ENCODE measurements at regions of chr15 and their contacts with region 1.

Region 1: GRCh38 chr15:40684381-40684780 is 10.6 kb upstream of the RAD51 start:
- H3K4me3 Mint-ChIP-seq: no peak overlapping the region
- H3K27ac Mint-ChIP-seq: no peak overlapping the region
- H3K4me1 Mint-ChIP-seq: no peaks in the 10 kb centered on the region
- H3K27me3 Mint-ChIP-seq: no peaks in the 10 kb centered on the region

Region 2: GRCh38 chr15:40274350-40275274 is 409.8 kb before region 1 on chr15:
- intact Hi-C with region 1: no loop called
- H3K4me3 Mint-ChIP-seq: no peak overlapping the region
- H3K27ac Mint-ChIP-seq: peak overlapping the region; percentile 64
- H3K4me1 Mint-ChIP-seq: peaks cover 50% of the 10 kb centered on the region
- H3K27me3 Mint-ChIP-seq: peaks cover 13% of the 10 kb centered on the region

Region 3: GRCh38 chr15:40782580-40783227 is 98.3 kb after region 1 on chr15:
- intact Hi-C with region 1: loop called (anchors 5 kb)
- H3K4me3 Mint-ChIP-seq: no peak overlapping the region
- H3K27ac Mint-ChIP-seq: no peak overlapping the region
- H3K4me1 Mint-ChIP-seq: peaks cover 9% of the 10 kb centered on the region
- H3K27me3 Mint-ChIP-seq: no peaks in the 10 kb centered on the region